Activated CD8-positive, alpha-beta T cell treated with anti-CD3 and anti-CD28 coated beads for 36 hours (primary cell): ENCODE measurements at regions of chr12 and their contacts with region 1.

Region 1: GRCh38 chr12:12376646-12377448 is 20.0 kb downstream of the BORCS5 start:
- DNase-seq: peak; percentile 20
- ATAC-seq: peak; percentile 66
- H3K4me3 Mint-ChIP-seq: no peak overlapping the region
- H3K27ac Mint-ChIP-seq: peak overlapping the region; percentile 25
- H3K4me1 Mint-ChIP-seq: peaks cover 33% of the 10 kb centered on the region
- H3K27me3 Mint-ChIP-seq: no peaks in the 10 kb centered on the region
- CTCF ChIP-seq: peak; percentile 70

Region 2: DNA sequence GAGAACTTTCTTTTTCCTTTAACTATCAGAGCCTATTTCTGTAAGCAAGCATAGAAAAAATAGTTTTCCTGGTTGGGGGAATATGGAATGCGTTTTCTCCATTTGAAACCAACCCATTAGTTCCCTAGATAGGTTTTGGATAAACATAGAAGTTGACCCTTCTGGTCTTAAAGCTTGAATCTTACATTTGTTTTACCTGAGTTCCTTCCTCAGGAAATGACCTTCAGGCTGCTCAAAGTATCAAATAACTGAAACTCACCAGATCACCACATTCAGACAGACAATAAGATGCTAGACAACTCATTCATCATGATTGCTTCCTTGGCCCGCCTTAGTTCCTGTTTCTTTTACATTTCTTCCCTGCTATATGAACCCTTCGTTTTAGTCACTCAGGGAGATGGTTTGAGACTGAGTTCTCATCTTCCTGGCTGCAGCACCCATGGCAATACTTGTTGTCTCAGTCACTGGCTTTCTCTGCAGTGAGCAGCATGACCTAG is 162.2 kb before region 1 on chr12:
- CTCF ChIA-PET with region 1: no interaction called
- POLR2A ChIA-PET with region 1: no interaction called
- intact Hi-C with region 1: no loop called
- DNase-seq: no peak
- ATAC-seq: no peak
- H3K4me3 Mint-ChIP-seq: no peak overlapping the region
- H3K27ac Mint-ChIP-seq: no peak overlapping the region
- H3K4me1 Mint-ChIP-seq: peaks cover 22% of the 10 kb centered on the region
- H3K27me3 Mint-ChIP-seq: peaks cover 14% of the 10 kb centered on the region
- CTCF ChIP-seq: no peak

Region 3: GRCh38 chr12:12356886-12357718 is 19.7 kb before region 1 on chr12 and contains the start of gene BORCS5:
- CTCF ChIA-PET with region 1: interaction called, 14 read pairs
- POLR2A ChIA-PET with region 1: interaction called, 5 read pairs
- intact Hi-C with region 1: no loop called
- DNase-seq: peak; percentile 99
- ATAC-seq: peak; percentile 97
- H3K4me3 Mint-ChIP-seq: peak within 1 kb of the TSS; percentile 91
- H3K27ac Mint-ChIP-seq: peak within 1 kb of the TSS; percentile 95
- H3K4me1 Mint-ChIP-seq: peaks cover 32% of the 10 kb centered on the region
- H3K27me3 Mint-ChIP-seq: no peaks in the 10 kb centered on the region
- CTCF ChIP-seq: peak; percentile 21
- total RNA-seq, gene BORCS5: 31.5 to 32.9 TPM

Region 4: GRCh38 chr12:12442548-12443071 is 65.8 kb after region 1 on chr12:
- CTCF ChIA-PET with region 1: interaction called, 12 read pairs
- POLR2A ChIA-PET with region 1: no interaction called
- intact Hi-C with region 1: no loop called
- DNase-seq: no peak
- ATAC-seq: peak; percentile 15
- H3K4me3 Mint-ChIP-seq: peak overlapping the region; percentile 45
- H3K27ac Mint-ChIP-seq: peak overlapping the region; percentile 96
- H3K4me1 Mint-ChIP-seq: peaks cover 62% of the 10 kb centered on the region
- H3K27me3 Mint-ChIP-seq: no peaks in the 10 kb centered on the region
- CTCF ChIP-seq: no peak

Region 5: DNA sequence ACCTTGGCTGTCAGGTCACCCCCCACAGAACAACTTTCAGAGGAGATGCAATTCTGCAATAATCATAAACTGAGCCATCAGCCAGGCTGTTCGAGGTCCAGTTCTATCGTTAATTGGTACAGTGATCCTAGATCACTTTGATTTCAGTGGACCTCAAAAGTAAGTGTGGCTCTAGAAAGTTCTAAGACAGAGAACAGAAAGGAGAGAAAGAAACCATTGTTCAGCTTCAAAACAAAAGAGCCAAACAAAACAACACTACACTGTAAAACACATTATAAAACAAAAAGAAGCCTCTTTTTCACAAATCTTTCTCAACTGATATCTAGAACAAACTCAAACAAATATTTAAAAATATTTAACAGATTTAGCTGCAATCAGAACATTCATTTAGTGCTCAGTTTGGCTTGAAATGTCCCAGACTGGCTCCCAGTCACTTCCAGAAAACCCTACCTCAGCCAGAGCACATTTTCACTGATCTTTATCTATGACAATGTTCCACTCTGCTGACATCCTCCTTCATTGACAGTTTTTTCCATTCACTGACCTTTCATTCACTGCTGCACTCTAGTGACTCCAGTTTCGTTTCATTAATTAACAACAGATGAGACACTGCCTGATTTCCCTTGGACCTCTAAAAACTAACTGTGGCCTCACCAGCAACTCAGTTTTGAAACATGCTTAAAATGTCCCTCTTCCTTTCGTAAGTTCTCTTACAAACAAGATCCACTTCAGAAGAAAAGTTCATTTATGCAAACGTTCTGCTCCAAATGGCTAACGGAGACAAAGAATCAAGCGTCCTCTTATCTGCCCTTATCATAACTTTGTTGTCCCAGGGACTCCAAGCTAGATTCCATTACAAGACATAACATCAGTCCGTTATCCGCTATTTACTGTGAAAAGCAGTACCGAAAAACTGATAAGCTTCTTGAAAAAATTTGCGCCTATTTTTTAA is 129.0 kb after region 1 on chr12:
- CTCF ChIA-PET with region 1: interaction called, 22 read pairs
- POLR2A ChIA-PET with region 1: no interaction called
- intact Hi-C with region 1: no loop called
- DNase-seq: peak; percentile 54
- ATAC-seq: peak; percentile 88
- H3K4me3 Mint-ChIP-seq: peak overlapping the region; percentile 42
- H3K27ac Mint-ChIP-seq: peak overlapping the region; percentile 96
- H3K4me1 Mint-ChIP-seq: peaks cover 75% of the 10 kb centered on the region
- H3K27me3 Mint-ChIP-seq: no peaks in the 10 kb centered on the region
- CTCF ChIP-seq: no peak

Region 6: GRCh38 chr12:12654691-12655460 is 278.0 kb after region 1 on chr12:
- CTCF ChIA-PET with region 1: interaction called, 53 read pairs
- POLR2A ChIA-PET with region 1: interaction called, 3 read pairs
- intact Hi-C with region 1: loop called (anchors 2 kb)
- DNase-seq: no peak
- ATAC-seq: no peak
- H3K4me3 Mint-ChIP-seq: no peak overlapping the region
- H3K27ac Mint-ChIP-seq: no peak overlapping the region
- H3K4me1 Mint-ChIP-seq: peaks cover 7% of the 10 kb centered on the region
- H3K27me3 Mint-ChIP-seq: no peaks in the 10 kb centered on the region
- CTCF ChIP-seq: no peak

Region 7: GRCh38 chr12:12704593-12705230 is 327.9 kb after region 1 on chr12:
- CTCF ChIA-PET with region 1: interaction called, 11 read pairs
- POLR2A ChIA-PET with region 1: no interaction called
- intact Hi-C with region 1: no loop called
- DNase-seq: peak; percentile 47
- ATAC-seq: peak; percentile 79
- H3K4me3 Mint-ChIP-seq: no peak overlapping the region
- H3K27ac Mint-ChIP-seq: peak overlapping the region; percentile 18
- H3K4me1 Mint-ChIP-seq: peaks cover 22% of the 10 kb centered on the region
- H3K27me3 Mint-ChIP-seq: no peaks in the 10 kb centered on the region
- CTCF ChIP-seq: no peak